Activated CD4-positive, alpha-beta T cell treated with anti-CD3 and anti-CD28 coated beads for 36 hours (primary cell): ENCODE measurements at regions of chr14 and their contacts with region 1.

Region 1: GRCh38 chr14:103169954-103170353 is 46.7 kb downstream of the TNFAIP2 start:
- DNase-seq: no peak
- ATAC-seq: no peak
- H3K4me3 Mint-ChIP-seq: no peak overlapping the region
- H3K27ac Mint-ChIP-seq: no peak overlapping the region
- H3K4me1 Mint-ChIP-seq: no peaks in the 10 kb centered on the region
- H3K27me3 Mint-ChIP-seq: peaks cover 16% of the 10 kb centered on the region

Region 2: GRCh38 chr14:102938191-102938590 is 231.8 kb before region 1 on chr14:
- CTCF ChIA-PET with region 1: no interaction called
- POLR2A ChIA-PET with region 1: interaction called, 13 read pairs
- intact Hi-C with region 1: no loop called
- DNase-seq: no peak
- ATAC-seq: no peak
- H3K4me3 Mint-ChIP-seq: no peak overlapping the region
- H3K27ac Mint-ChIP-seq: no peak overlapping the region
- H3K4me1 Mint-ChIP-seq: no peaks in the 10 kb centered on the region
- H3K27me3 Mint-ChIP-seq: no peaks in the 10 kb centered on the region

Region 3: DNA sequence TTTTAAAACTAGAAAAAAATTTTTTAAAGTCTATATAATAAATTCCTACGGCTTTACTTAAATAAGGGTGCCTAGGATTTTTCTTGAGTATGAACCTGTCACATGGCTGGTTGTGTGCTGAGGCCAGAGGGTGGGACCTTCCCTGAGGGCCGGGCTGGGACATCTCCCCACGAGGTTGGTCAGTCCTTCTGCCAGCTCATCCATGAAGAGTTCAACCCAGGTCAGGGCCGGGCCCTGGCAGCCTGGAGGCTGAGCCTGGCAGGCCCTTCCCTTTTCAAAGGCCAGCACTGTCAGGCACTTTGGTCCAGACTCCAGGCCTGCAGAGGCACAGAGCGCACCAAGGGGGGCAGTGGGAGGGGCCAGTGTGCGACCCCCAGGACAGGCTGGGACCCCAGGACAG is 14.9 kb before region 1 on chr14:
- CTCF ChIA-PET with region 1: no interaction called
- POLR2A ChIA-PET with region 1: no interaction called
- intact Hi-C with region 1: no loop called
- DNase-seq: no peak
- ATAC-seq: no peak
- H3K4me3 Mint-ChIP-seq: no peak overlapping the region
- H3K27ac Mint-ChIP-seq: no peak overlapping the region
- H3K4me1 Mint-ChIP-seq: no peaks in the 10 kb centered on the region
- H3K27me3 Mint-ChIP-seq: peaks cover 2% of the 10 kb centered on the region